Activated CD8-positive, alpha-beta memory T cell treated with anti-CD3 and anti-CD28 coated beads, Interleukin-2, amount 10 ng/mL, durations not matched to agents 7 days and 5 days (primary cell): ENCODE measurements at regions of chr12 and their contacts with region 1.

Region 1: DNA sequence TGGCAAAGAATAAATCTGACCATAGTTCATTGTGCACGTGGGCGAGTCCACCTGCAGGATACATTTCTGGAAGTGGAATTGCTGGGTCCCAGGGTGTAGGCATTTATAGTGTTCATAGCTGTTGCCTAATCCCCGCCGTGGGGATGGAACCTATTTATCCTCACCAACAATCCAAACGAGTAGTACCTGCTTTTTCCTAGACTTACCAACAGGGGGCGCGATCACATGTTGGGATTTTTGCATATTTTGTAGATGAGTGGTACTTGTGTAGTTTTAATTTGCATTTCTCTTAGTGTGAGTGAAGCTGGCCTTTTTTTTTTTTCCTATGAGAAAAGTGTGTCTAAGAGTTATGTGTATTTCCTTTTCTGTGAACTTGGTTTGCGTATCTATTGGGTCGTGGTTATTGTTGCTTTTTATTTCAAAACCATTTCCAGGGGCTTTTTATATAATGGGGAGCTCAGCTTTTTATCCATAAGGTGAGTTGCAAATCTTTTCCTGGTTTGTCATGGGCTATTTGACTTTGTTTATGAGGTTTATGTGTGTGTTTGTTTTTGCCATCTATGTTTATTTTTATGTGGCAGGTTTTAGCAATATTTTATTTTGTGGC is 67.2 kb downstream of the CCDC92 start:
- DNase-seq: peak; percentile 76
- ATAC-seq: peak; percentile 38
- H3K4me3 Mint-ChIP-seq: no peak overlapping the region
- H3K27ac Mint-ChIP-seq: no peak overlapping the region
- H3K4me1 Mint-ChIP-seq: peaks cover 7% of the 10 kb centered on the region
- H3K27me3 Mint-ChIP-seq: peaks cover 4% of the 10 kb centered on the region

Region 2: DNA sequence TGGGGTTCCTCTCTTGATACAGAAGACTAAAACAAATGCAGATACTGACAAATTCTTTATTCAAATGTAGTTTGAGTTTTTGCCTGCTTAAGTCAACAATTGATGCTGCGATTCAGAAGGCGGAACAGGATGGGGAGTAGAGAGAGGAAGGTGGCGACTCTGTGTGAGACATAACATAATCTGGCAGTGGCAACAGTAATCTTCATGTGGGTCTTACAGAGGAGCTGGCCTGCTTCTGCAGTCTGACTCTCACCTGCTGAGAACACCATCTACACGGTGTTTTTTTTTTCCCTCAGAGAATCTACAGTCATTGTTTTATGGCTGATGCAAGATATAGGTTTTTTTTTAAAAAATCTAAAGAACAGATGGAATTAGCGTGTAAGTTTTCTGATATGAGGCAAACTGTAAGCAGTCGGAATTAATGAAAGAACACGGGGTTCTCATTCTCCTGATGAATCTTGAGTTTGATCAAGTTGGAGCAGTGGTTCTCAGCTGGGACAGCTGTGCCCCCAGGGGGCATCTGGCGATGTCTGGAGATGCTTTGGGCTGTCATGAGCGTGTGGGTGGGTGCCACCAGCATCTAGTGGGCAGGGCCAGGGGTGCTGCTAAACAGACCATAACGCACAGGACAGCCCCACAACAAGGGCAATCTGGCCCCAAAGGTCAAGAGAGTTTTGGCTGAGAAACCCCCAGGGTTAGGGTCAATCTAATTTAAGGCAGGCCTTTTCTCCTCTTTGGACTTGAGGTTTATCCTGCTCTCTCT is 57.3 kb after region 1 on chr12:
- CTCF ChIA-PET with region 1: interaction called, 10 read pairs
- DNase-seq: no peak
- ATAC-seq: no peak
- H3K4me3 Mint-ChIP-seq: no peak overlapping the region
- H3K27ac Mint-ChIP-seq: no peak overlapping the region
- H3K4me1 Mint-ChIP-seq: no peaks in the 10 kb centered on the region
- H3K27me3 Mint-ChIP-seq: no peaks in the 10 kb centered on the region

Region 3: GRCh38 chr12:123972457-123973401 is 67.3 kb after region 1 on chr12 and contains the starts of genes CCDC92 and ZNF664:
- CTCF ChIA-PET with region 1: interaction called, 13 read pairs
- DNase-seq: peak; percentile 94
- ATAC-seq: peak; percentile 82
- H3K4me3 Mint-ChIP-seq: peak within 1 kb of the TSS; percentile 82
- H3K27ac Mint-ChIP-seq: peak within 1 kb of the TSS; percentile 65
- H3K4me1 Mint-ChIP-seq: peaks cover 24% of the 10 kb centered on the region
- H3K27me3 Mint-ChIP-seq: no peaks in the 10 kb centered on the region
- total RNA-seq, gene CCDC92: 16.4 to 19.8 TPM
- total RNA-seq, gene ZNF664: 45.8 to 52.5 TPM

Region 4: GRCh38 chr12:123983822-123984485 is 78.5 kb after region 1 on chr12:
- CTCF ChIA-PET with region 1: interaction called, 56 read pairs
- DNase-seq: peak; percentile 61
- ATAC-seq: peak; percentile 83
- H3K4me3 Mint-ChIP-seq: no peak overlapping the region
- H3K27ac Mint-ChIP-seq: no peak overlapping the region
- H3K4me1 Mint-ChIP-seq: peaks cover 15% of the 10 kb centered on the region
- H3K27me3 Mint-ChIP-seq: no peaks in the 10 kb centered on the region

Region 5: GRCh38 chr12:124032265-124032886 is 127.0 kb after region 1 on chr12:
- CTCF ChIA-PET with region 1: interaction called, 21 read pairs
- DNase-seq: no peak
- ATAC-seq: no peak
- H3K4me3 Mint-ChIP-seq: no peak overlapping the region
- H3K27ac Mint-ChIP-seq: no peak overlapping the region
- H3K4me1 Mint-ChIP-seq: no peaks in the 10 kb centered on the region
- H3K27me3 Mint-ChIP-seq: peaks cover 12% of the 10 kb centered on the region